Ovary (tissue), 10 donors: ENCODE measurements at regions of chr5 and their contacts with region 1.

Region 1: GRCh38 chr5:18985171-18985758 is 1002.7 kb downstream of the CDH18 start:
- DNase-seq: no peak
- H3K4me3 ChIP-seq: no peak overlapping the region
- H3K27ac ChIP-seq: no peak overlapping the region
- H3K4me1 ChIP-seq: no peaks in the 10 kb centered on the region
- H3K27me3 ChIP-seq: no peaks in the 10 kb centered on the region
- CTCF ChIP-seq: no peak
- EP300 ChIP-seq: no peak
- POLR2A ChIP-seq: no peak

Region 2: GRCh38 chr5:19058216-19058615 is 73.0 kb after region 1 on chr5:
- intact Hi-C with region 1: no loop called
- DNase-seq: no peak
- H3K4me3 ChIP-seq: no peak overlapping the region
- H3K27ac ChIP-seq: no peak overlapping the region
- H3K4me1 ChIP-seq: no peaks in the 10 kb centered on the region
- H3K27me3 ChIP-seq: no peaks in the 10 kb centered on the region
- CTCF ChIP-seq: no peak
- EP300 ChIP-seq: no peak
- POLR2A ChIP-seq: no peak

Region 3: DNA sequence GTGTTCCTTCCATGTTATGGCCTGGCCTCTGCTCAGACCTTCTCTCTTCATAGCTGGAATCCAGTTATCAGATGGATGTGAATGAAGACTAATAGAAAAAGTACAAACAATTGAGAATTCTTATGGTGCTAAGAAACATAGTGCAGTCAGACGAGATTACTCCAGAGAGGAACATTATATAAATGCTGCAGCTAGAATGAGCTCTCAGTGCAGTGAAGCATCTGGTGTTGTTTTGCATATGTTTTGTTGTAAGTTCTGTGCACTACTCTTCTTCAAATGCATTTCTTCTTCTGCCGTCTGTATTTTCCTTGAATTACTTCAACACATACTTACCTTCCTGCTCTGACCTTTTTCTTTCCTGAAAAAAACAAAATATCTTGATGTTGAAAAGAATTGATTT is 1605.1 kb after region 1 on chr5:
- intact Hi-C with region 1: loop called in 1 of 4 experiments (anchors 10 kb)
- DNase-seq: no peak
- H3K4me3 ChIP-seq: no peak overlapping the region
- H3K27ac ChIP-seq: no peak overlapping the region
- H3K4me1 ChIP-seq: no peaks in the 10 kb centered on the region
- H3K27me3 ChIP-seq: no peaks in the 10 kb centered on the region
- CTCF ChIP-seq: no peak
- EP300 ChIP-seq: no peak
- POLR2A ChIP-seq: no peak